AG04449 (cell line): ENCODE measurements at regions of chr11 and their contacts with region 1.

Region 1: GRCh38 chr11:87421422-87421821 is 383.7 kb downstream of the TMEM135 start:
- DNase-seq: no peak
- H3K4me3 ChIP-seq: no peak overlapping the region
- CTCF ChIP-seq: peak; percentile 79

Region 2: DNA sequence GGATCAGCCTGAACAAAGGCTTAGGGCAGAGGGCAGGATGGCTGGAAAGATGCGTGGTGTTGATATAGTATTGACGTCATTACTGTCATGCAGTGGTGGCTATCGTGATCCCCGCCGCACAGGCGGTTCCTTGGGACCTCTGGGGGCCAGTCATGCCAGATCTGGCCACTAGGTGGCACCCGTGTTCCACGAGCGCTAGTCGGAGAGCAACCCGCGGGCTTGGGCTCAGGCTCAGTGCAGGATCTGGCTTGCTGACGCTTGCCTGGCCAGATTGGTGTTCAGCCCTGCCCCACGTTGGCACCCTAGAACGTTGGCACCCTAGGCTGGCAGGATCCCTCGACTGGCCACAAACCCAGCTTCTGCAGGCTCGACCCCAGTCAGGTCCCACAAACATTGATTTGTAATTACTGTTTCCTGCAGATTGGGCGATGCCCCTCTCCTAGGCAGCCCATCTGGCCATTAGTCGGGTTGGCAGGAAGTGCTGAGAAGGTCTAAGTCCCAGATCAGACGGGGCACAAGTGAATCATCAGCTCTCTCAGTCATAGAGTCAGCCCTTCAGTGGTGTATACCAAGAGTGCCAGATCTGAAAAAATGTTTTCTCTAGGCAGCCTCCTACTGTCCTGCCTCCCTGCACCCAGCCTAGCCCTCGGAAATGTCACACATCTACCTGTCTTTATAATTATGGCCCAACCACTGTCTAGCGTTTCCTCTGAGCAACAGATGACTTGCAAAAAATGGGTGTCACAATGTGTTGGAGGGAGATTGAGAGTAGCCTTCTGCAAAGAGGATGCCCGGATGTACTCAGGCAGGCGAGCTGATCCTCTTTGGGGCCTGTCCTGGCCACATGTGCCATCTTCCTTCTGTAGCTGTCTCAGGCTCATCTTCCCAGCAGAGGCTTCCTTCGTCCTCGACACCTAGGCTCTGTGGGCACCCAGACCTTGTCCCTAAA is 68.4 kb before region 1 on chr11:
- CTCF ChIA-PET with region 1: interaction called, 175 read pairs
- POLR2A ChIA-PET with region 1: interaction called, 3 read pairs
- DNase-seq: peak; percentile 17
- H3K4me3 ChIP-seq: peak overlapping the region; percentile 31
- CTCF ChIP-seq: peak; percentile 98

Region 3: GRCh38 chr11:87368858-87369480 is 52.5 kb before region 1 on chr11:
- CTCF ChIA-PET with region 1: interaction called, 10 read pairs
- POLR2A ChIA-PET with region 1: no interaction called
- DNase-seq: no peak
- H3K4me3 ChIP-seq: no peak overlapping the region
- CTCF ChIP-seq: no peak

Region 4: GRCh38 chr11:87398931-87399330 is 22.5 kb before region 1 on chr11:
- CTCF ChIA-PET with region 1: interaction called, 11 read pairs
- POLR2A ChIA-PET with region 1: no interaction called
- DNase-seq: no peak
- H3K4me3 ChIP-seq: no peak overlapping the region
- CTCF ChIP-seq: no peak

Region 5: DNA sequence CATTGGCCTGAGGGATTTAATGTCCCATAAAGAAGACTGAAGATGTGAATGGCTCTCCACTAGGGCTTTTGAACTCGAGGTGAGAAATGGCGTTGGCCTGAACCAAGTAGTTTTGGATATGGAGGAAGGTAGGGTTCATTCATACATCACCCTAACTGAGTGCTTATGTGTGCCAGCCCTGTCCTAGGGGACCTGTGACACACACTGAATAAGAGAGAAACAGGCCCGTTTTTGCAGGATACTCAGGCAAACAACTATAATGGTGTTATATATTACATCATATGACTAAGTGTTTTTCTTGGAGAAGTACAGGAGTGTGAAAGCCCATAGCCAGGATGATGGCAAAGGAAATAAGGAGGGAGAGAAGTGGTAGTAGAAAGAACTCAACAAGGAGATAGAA is 15.6 kb before region 1 on chr11:
- CTCF ChIA-PET with region 1: interaction called, 59 read pairs
- POLR2A ChIA-PET with region 1: no interaction called
- DNase-seq: no peak
- H3K4me3 ChIP-seq: no peak overlapping the region
- CTCF ChIP-seq: no peak

Region 6: DNA sequence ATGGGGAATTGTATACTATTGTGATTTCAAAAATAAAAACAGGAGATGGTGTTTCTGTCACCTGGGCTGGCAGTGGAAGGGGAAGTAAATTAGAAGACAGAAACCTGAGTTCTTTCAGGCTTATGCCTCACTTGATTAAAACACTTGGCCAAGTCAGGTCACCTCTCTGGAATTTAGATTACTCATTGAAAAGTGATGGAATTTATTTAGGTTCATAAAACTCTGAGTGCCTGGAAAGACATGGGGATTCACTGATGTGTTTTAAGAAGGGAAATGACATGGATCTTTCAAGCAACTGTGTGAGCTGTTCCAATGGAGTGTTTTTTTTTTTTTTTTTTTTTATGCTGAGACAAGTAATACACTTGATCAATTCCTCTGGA is 16.4 kb after region 1 on chr11:
- CTCF ChIA-PET with region 1: interaction called, 76 read pairs
- POLR2A ChIA-PET with region 1: no interaction called
- DNase-seq: no peak
- H3K4me3 ChIP-seq: no peak overlapping the region
- CTCF ChIP-seq: no peak

Region 7: GRCh38 chr11:87444993-87445392 is 23.6 kb after region 1 on chr11:
- CTCF ChIA-PET with region 1: interaction called, 32 read pairs
- POLR2A ChIA-PET with region 1: interaction called, 3 read pairs
- DNase-seq: no peak
- H3K4me3 ChIP-seq: no peak overlapping the region
- CTCF ChIP-seq: no peak